Common myeloid progenitor, CD34-positive (primary cell): ENCODE measurements at regions of chr22 and their contacts with region 1.

Region 1: DNA sequence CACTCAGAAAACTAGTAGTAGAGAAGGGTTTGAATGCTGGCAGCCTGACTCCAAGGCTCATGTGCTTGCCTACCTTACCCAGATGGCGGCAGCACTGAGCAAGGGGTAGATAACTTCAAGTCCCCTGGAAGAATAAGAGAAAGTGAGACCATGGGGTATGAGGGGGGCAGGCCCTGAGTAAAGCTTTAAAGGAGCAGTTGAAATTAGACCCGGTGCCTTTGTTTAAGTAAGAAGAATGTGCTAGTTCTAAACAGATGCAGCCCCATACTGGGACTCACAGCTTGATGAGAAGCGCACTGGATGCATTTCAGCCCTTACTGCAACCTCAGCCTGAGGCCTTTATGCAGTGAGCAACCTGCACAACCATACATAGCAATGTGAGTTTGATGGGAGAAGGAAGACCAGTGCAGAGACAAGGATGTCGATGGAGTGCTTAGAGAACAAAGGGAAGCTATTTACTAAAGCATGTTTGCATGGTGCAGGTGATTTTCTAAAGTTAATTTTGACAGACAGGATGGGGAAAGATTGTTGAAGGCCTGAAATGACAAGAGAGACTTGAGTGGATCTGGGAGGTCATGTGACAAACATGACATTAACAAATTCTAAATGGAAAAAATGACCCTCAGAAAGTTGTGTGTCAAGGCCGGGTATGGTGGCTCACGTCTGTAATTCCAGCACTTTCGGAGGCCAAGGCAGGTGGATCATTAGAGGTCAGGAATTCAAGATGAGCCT is 27.1 kb upstream of the TMA7B start:
- DNase-seq: peak; percentile 54 to 77 (median 73)
- H3K4me3 ChIP-seq: no peak overlapping the region
- H3K27ac ChIP-seq: no peak overlapping the region
- H3K4me1 ChIP-seq: peaks cover 0 to 22% (median 4%) of the 10 kb centered on the region in 4 experiments
- H3K27me3 ChIP-seq: peaks cover 0 to 39% (median 14%) of the 10 kb centered on the region in 5 experiments

Region 2: GRCh38 chr22:39943337-39943736 is 10.3 kb after region 1 on chr22:
- CTCF ChIA-PET with region 1: interaction called, 10 read pairs
- POLR2A ChIA-PET with region 1: no interaction called
- DNase-seq: no peak
- H3K4me3 ChIP-seq: no peak overlapping the region
- H3K27ac ChIP-seq: no peak overlapping the region
- H3K4me1 ChIP-seq: peaks cover 0 to 31% (median 10%) of the 10 kb centered on the region in 4 experiments
- H3K27me3 ChIP-seq: peaks cover 0 to 1% (median 0%) of the 10 kb centered on the region in 5 experiments